ENCODE measurements at regions of chr7 and their contacts with region 1.

Region 1: GRCh38 chr7:157007470-157008066 is 2.9 kb downstream of the MNX1 start:
- DNase-seq: no peak
- ATAC-seq: no peak
- H3K4me3 ChIP-seq: no peak overlapping the region
- H3K27ac ChIP-seq: no peak overlapping the region
- H3K4me1 ChIP-seq: peaks cover 15% of the 10 kb centered on the region
- H3K27me3 ChIP-seq: no peaks in the 10 kb centered on the region
- CTCF ChIP-seq: no peak

Region 2: GRCh38 chr7:157044943-157045660 is 37.5 kb after region 1 on chr7:
- CTCF ChIA-PET with region 1: interaction called, 11 read pairs
- POLR2A ChIA-PET with region 1: no interaction called
- in situ Hi-C with region 1: no loop called
- intact Hi-C with region 1: no loop called
- DNase-seq: no peak
- ATAC-seq: no peak
- H3K4me3 ChIP-seq: no peak overlapping the region
- H3K27ac ChIP-seq: no peak overlapping the region
- H3K4me1 ChIP-seq: peaks cover 6% of the 10 kb centered on the region; the same call in 1 of the 2 replicates
- H3K27me3 ChIP-seq: no peaks in the 10 kb centered on the region
- CTCF ChIP-seq: no peak

Measured in Panc1 (cell line).